ENCODE measurements at regions of chr10 and their contacts with region 1.

Region 1: GRCh38 chr10:6348096-6348874 is 145.6 kb downstream of the PFKFB3 start:
- DNase-seq: peak; percentile 41 to 96 (median 93)
- ATAC-seq: peak; percentile 95
- H3K4me3 ChIP-seq: peak overlapping the region; percentile 54
- H3K4me3 Mint-ChIP-seq: peak overlapping the region; percentile 78 to 88 (median 82)
- H3K27ac ChIP-seq: peak overlapping the region; percentile 79
- H3K27ac Mint-ChIP-seq: peak overlapping the region; percentile 91 to 99 (median 96)
- H3K4me1 ChIP-seq: peaks cover 25 to 34% of the 10 kb centered on the region in 2 donors
- H3K4me1 Mint-ChIP-seq: peaks cover 40 to 77% (median 57%) of the 10 kb centered on the region in 7 donors
- H3K27me3 ChIP-seq: no peaks in the 10 kb centered on the region
- H3K27me3 Mint-ChIP-seq: no peaks in the 10 kb centered on the region

Region 2: GRCh38 chr10:6144406-6145165 is 203.7 kb before region 1 on chr10:
- CTCF ChIA-PET with region 1: no interaction called
- POLR2A ChIA-PET with region 1: interaction called, 4 read pairs
- intact Hi-C with region 1: loop called in 1 of 2 experiments (anchors 1 kb)
- DNase-seq: peak; percentile 79 to 92 (median 85)
- ATAC-seq: peak; percentile 94
- H3K4me3 ChIP-seq: peak overlapping the region; percentile 92
- H3K4me3 Mint-ChIP-seq: peak overlapping the region; percentile 81 to 92 (median 87)
- H3K27ac ChIP-seq: peak overlapping the region; percentile 86
- H3K27ac Mint-ChIP-seq: peak overlapping the region; percentile 74 to 91 (median 84)
- H3K4me1 ChIP-seq: peaks cover 24 to 39% of the 10 kb centered on the region in 2 donors
- H3K4me1 Mint-ChIP-seq: peaks cover 48 to 68% (median 60%) of the 10 kb centered on the region in 7 donors
- H3K27me3 ChIP-seq: no peaks in the 10 kb centered on the region
- H3K27me3 Mint-ChIP-seq: peaks cover 0 to 1% (median 0%) of the 10 kb centered on the region in 5 donors

Region 3: DNA sequence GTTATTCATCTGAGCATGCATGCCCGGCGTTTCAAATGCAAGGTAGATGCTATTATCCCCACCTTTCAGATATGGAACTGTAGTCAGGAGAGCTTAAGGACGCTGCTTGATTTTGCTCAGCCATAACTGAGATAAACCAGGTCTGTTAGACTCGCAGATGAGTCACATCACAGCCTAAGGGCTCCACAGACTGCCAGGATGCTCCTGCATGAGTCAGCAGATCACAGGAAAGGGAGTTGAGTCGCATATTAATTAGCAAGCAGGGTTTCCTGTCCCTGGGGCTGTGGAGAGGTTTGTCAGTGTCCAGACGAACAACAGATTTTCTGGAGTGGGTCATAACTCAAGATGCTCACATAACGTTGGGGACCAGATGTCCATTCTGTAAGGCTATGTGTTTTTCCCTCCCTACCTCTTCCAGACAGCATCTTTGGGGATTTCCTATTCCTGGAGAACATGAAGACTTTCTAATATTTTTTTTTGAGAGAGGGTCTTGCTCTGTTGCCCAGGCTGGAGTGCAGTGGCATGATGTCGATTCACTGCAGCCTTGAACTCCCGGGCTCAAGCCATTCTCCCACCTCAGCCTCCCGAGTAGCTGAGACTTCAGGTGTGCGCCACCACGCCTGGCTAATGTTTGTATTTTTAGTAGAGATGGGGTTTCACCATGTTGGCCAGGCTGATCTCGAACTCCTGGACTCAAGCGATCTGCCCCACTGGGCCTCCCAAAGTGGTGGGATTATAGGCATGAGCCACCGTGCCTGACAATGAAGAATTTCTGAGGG is 108.9 kb before region 1 on chr10:
- CTCF ChIA-PET with region 1: no interaction called
- POLR2A ChIA-PET with region 1: no interaction called
- intact Hi-C with region 1: loop called in 1 of 2 experiments (anchors 10 kb)
- DNase-seq: peak in 1 of 9 donors; percentile 69
- ATAC-seq: peak; percentile 82
- H3K4me3 ChIP-seq: no peak overlapping the region
- H3K4me3 Mint-ChIP-seq: peak overlapping the region in 1 of 10 donors; percentile 43
- H3K27ac ChIP-seq: no peak overlapping the region
- H3K27ac Mint-ChIP-seq: peak overlapping the region in 4 of 9 donors; percentile 4 to 57 (median 40)
- H3K4me1 ChIP-seq: peaks cover 0 to 8% of the 10 kb centered on the region in 2 donors
- H3K4me1 Mint-ChIP-seq: peaks cover 0 to 41% (median 0%) of the 10 kb centered on the region in 7 donors
- H3K27me3 ChIP-seq: no peaks in the 10 kb centered on the region
- H3K27me3 Mint-ChIP-seq: no peaks in the 10 kb centered on the region

Region 4: GRCh38 chr10:6382081-6382480 is 33.8 kb after region 1 on chr10:
- CTCF ChIA-PET with region 1: interaction called, 3 read pairs
- POLR2A ChIA-PET with region 1: interaction called, 29 read pairs
- intact Hi-C with region 1: loop called in 1 of 2 experiments (anchors 1 kb)
- DNase-seq: peak in 7 of 9 donors; percentile 40 to 63 (median 53)
- ATAC-seq: peak; percentile 53
- H3K4me3 ChIP-seq: peak overlapping the region; percentile 30
- H3K4me3 Mint-ChIP-seq: peak overlapping the region; percentile 52 to 84 (median 72)
- H3K27ac ChIP-seq: no peak overlapping the region
- H3K27ac Mint-ChIP-seq: peak overlapping the region; percentile 9 to 86 (median 76)
- H3K4me1 ChIP-seq: peaks cover 0 to 17% of the 10 kb centered on the region in 2 donors
- H3K4me1 Mint-ChIP-seq: peaks cover 11 to 27% (median 20%) of the 10 kb centered on the region in 7 donors
- H3K27me3 ChIP-seq: no peaks in the 10 kb centered on the region
- H3K27me3 Mint-ChIP-seq: no peaks in the 10 kb centered on the region

Region 5: DNA sequence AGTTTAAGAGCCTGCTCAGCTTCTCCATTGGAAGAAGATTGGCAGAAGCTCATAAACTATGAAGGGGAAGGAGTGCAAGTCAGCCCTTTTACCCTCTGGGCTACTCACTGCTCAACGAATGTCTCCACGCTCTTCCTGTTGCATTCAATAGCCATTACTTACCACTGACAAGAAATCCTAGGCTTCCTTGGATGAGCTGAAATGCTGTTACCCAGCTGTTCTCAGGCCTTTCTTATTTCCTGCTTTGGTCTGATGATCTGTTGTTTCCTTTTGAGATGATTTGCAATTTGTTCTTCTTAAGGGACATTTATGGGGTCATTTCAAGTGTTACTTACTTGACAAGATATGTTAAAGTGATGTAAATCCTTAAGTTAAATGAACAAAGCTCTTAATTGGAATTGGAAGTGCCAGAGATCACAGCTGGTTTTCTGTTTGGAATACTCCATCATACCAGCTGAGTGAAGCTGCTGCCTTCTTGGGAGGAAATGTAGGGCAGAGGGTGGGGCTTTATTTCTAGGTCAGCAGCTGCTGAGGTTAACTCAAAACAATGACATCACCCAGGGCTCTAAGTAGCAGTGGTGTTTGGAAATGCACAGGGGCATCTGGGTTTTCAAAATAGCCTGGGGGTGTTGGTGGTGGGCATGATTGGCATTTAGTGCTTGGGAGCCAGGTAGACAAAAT is 61.8 kb after region 1 on chr10:
- CTCF ChIA-PET with region 1: interaction called, 4 read pairs
- POLR2A ChIA-PET with region 1: interaction called, 12 read pairs
- intact Hi-C with region 1: no loop called
- DNase-seq: peak in 8 of 9 donors; percentile 20 to 64 (median 56)
- ATAC-seq: peak; percentile 95
- H3K4me3 ChIP-seq: peak overlapping the region; percentile 28
- H3K4me3 Mint-ChIP-seq: peak overlapping the region in 9 of 10 donors; percentile 43 to 75 (median 66)
- H3K27ac ChIP-seq: peak overlapping the region; percentile 55
- H3K27ac Mint-ChIP-seq: peak overlapping the region; percentile 83 to 97 (median 89)
- H3K4me1 ChIP-seq: peaks cover 11 to 25% of the 10 kb centered on the region in 2 donors
- H3K4me1 Mint-ChIP-seq: peaks cover 19 to 40% (median 34%) of the 10 kb centered on the region in 7 donors
- H3K27me3 ChIP-seq: no peaks in the 10 kb centered on the region
- H3K27me3 Mint-ChIP-seq: no peaks in the 10 kb centered on the region

Measured in naive thymus-derived CD4-positive, alpha-beta T cell (primary cell).